Left ventricle myocardium inferior (tissue), 1 donor: ENCODE measurements at regions of chr10 and their contacts with region 1.

Region 1: GRCh38 chr10:114714281-114714741 is 56.2 kb upstream of the ABLIM1 start:
- DNase-seq: peak; percentile 43
- H3K4me3 ChIP-seq: peak overlapping the region; percentile 32
- H3K27ac ChIP-seq: peak overlapping the region; percentile 91
- H3K4me1 ChIP-seq: peaks cover 100% of the 10 kb centered on the region
- H3K27me3 ChIP-seq: no peaks in the 10 kb centered on the region
- CTCF ChIP-seq: no peak

Region 2: GRCh38 chr10:114767101-114767985 is 53.0 kb after region 1 on chr10:
- intact Hi-C with region 1: loop called (anchors 10 kb)
- DNase-seq: peak; percentile 43
- H3K4me3 ChIP-seq: peak overlapping the region; percentile 85
- H3K27ac ChIP-seq: peak overlapping the region; percentile 93
- H3K4me1 ChIP-seq: peaks cover 63% of the 10 kb centered on the region
- H3K27me3 ChIP-seq: no peaks in the 10 kb centered on the region
- CTCF ChIP-seq: no peak